Dendritic cell treated with granulocyte-macrophage colony-stimulating factor and Interleukin-4, amounts not matched to agents 40 ng/mL and 50 ng/mL, for 4 days (primary cell): ENCODE measurements at regions of chr6 and their contacts with region 1.

Region 1: GRCh38 chr6:89970609-89971337 is 76.5 kb downstream of the GJA10 start:
- H3K4me3 Mint-ChIP-seq: no peak overlapping the region
- H3K27ac Mint-ChIP-seq: no peak overlapping the region
- H3K4me1 Mint-ChIP-seq: no peaks in the 10 kb centered on the region
- H3K27me3 Mint-ChIP-seq: no peaks in the 10 kb centered on the region

Region 2: DNA sequence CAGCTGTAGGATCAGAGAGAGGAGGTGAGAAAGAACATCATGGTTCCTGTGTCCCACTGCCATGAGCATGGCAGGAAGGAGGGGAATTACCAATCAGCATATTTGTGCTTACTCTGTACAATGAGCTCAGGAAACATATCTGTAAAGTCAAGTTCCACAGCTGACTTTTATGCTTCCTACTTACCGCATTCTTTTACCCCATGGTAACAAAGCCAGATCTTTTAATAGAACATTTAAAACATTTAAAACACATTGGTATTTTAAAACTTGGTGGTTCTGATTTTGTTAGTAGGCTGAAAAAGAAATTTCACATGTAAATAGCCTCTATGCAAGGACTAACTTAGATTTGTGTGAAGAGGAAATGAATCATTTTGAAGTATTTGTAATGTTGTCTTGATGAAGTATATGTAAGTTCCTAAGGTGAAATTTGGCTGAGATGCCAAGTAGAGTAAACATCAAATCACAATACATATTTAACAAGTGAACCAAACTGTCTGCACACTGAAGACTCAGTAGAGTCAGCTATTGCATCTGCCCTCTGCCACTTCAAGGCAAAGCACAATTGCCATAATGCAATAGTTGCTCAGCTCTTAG is 38.2 kb after region 1 on chr6:
- intact Hi-C with region 1: no loop called
- H3K4me3 Mint-ChIP-seq: no peak overlapping the region
- H3K27ac Mint-ChIP-seq: no peak overlapping the region
- H3K4me1 Mint-ChIP-seq: no peaks in the 10 kb centered on the region
- H3K27me3 Mint-ChIP-seq: no peaks in the 10 kb centered on the region

Region 3: GRCh38 chr6:90179190-90180169 is 208.7 kb after region 1 on chr6:
- intact Hi-C with region 1: loop called (anchors 10 kb)
- H3K4me3 Mint-ChIP-seq: no peak overlapping the region
- H3K27ac Mint-ChIP-seq: no peak overlapping the region
- H3K4me1 Mint-ChIP-seq: peaks cover 32% of the 10 kb centered on the region
- H3K27me3 Mint-ChIP-seq: peaks cover 11% of the 10 kb centered on the region

Region 4: DNA sequence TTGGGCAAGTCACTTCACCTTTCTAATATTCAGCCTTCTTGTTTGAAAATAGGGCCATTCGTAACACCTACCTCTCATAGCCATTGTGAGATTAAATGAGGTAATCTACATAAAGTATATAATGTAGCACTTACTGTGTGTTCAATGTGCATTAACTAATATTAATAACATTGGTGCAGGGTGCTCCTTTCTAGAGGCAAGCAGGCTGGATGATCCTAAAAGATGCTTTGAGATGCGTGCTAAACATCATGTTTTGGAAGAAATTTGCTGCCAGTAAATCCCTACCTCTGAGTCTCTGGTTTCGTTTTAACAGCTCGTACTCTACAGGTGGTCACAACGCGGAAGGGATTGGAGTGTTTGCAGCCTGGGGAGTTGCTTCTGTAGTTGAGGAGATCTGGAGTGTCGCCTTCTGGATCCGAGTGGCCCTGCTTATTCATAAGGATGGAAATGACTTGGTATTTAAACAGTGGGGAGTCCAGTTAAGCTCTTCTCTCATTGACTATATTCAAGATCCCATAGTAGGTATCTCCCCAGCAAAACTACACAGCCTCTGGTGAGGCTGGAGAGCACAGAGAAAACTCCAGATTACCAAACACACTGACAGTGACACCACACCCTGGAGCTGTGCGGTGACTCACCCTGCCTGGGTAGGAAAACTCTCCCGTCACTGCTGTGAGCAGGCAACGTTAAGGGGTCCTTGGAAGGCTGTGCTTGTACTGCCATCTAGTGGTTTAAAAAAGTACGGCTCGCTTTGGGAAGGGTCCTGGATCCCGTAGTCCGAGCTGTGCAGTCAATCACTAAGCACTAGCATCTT is 508.2 kb after region 1 on chr6:
- intact Hi-C with region 1: loop called (anchors 1 kb)
- H3K4me3 Mint-ChIP-seq: no peak overlapping the region
- H3K27ac Mint-ChIP-seq: peak overlapping the region; percentile 44
- H3K4me1 Mint-ChIP-seq: peaks cover 8% of the 10 kb centered on the region
- H3K27me3 Mint-ChIP-seq: no peaks in the 10 kb centered on the region

Region 5: DNA sequence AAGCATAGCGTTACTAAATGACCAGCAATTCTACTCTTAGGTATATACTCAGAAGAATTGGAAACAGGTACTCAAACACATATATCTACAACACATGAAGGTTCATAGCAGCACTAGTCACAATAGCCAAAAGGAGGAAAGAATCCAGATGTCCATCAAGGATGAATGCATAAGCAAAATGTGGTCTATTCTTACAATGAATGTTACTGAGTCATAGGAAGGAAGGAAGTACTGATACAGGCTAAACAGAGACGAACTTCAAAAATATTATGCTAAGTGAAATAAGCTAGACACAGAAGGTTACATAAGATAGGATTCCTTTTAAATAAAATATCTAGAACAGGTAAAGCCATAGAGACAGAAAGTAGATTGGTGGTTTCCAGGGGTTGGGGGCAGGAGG is 522.6 kb after region 1 on chr6:
- intact Hi-C with region 1: no loop called
- H3K4me3 Mint-ChIP-seq: no peak overlapping the region
- H3K27ac Mint-ChIP-seq: no peak overlapping the region
- H3K4me1 Mint-ChIP-seq: peaks cover 8% of the 10 kb centered on the region
- H3K27me3 Mint-ChIP-seq: no peaks in the 10 kb centered on the region